Transverse colon (tissue), 4 donors: ENCODE measurements at regions of chr21 and their contacts with region 1.

Region 1: GRCh38 chr21:33441489-33442477 is 38.0 kb downstream of the TMEM50B start:
- DNase-seq: peak; percentile 59
- H3K4me3 ChIP-seq: no peak overlapping the region
- H3K27ac ChIP-seq: peak overlapping the region; percentile 43 to 70 (median 56)
- H3K4me1 ChIP-seq: peaks cover 0 to 12% (median 5%) of the 10 kb centered on the region in 4 donors
- H3K27me3 ChIP-seq: no peaks in the 10 kb centered on the region
- CTCF ChIP-seq: no peak
- EP300 ChIP-seq: no peak
- POLR2A ChIP-seq: no peak

Region 2: GRCh38 chr21:33360881-33361602 is 80.7 kb before region 1 on chr21:
- in situ Hi-C with region 1: no loop called
- intact Hi-C with region 1: loop called (anchors 10 kb)
- DNase-seq: peak; percentile 89
- H3K4me3 ChIP-seq: peak overlapping the region in 2 of 4 donors; percentile 0 to 34
- H3K27ac ChIP-seq: peak overlapping the region; percentile 68 to 84 (median 71)
- H3K4me1 ChIP-seq: peaks cover 0 to 38% (median 18%) of the 10 kb centered on the region in 4 donors
- H3K27me3 ChIP-seq: no peaks in the 10 kb centered on the region
- CTCF ChIP-seq: peak; percentile 76 to 96 (median 86)
- EP300 ChIP-seq: no peak
- POLR2A ChIP-seq: peak; percentile 12

Region 3: DNA sequence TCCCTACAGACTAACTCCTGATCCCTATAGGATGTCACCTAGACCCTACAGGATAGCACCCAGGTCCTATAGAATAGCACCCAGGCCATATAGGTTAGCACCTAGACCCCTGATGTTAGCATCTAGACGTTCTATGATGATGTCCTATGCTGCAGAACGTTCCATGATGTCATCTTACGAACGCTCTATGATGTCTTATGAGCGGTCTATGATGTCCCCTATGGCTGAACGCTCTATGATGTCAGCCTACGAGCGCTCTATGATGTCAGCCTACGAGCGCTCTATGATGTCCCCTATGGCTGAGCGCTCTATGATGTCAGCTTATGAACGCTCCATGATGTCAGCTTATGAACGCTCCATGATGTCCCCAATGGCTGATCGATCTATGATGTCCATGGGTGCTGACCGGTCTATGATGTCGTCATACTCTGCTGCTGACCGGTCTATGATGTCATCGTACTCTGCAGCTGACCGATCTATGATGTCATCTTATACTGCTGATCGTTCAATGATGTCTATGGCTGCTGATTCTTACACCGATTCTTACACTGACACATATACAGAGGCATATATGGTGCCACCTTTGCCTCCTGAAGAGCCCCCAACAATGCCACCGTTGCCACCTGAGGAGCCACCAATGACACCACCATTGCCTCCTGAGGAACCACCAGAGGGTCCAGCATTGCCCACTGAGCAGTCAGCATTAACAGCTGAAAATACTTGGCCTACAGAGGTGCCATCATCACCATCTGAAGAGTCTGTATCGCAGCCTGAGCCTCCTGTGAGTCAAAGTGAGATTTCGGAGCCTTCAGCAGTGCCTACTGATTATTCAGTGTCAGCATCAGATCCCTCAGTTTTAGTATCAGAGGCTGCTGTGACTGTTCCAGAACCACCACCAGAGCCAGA is 110.6 kb after region 1 on chr21:
- in situ Hi-C with region 1: no loop called
- intact Hi-C with region 1: no loop called
- DNase-seq: no peak
- H3K4me3 ChIP-seq: no peak overlapping the region
- H3K27ac ChIP-seq: no peak overlapping the region
- H3K4me1 ChIP-seq: peaks cover 0 to 6% (median 3%) of the 10 kb centered on the region in 4 donors
- H3K27me3 ChIP-seq: no peaks in the 10 kb centered on the region
- CTCF ChIP-seq: no peak
- EP300 ChIP-seq: no peak
- POLR2A ChIP-seq: no peak